ENCODE measurements at regions of chr11 and their contacts with region 1.

Region 1: GRCh38 chr11:11157185-11157584 is 195.9 kb downstream of the CSNK2A3 start:
- DNase-seq: peak; percentile 48 to 87 (median 58)
- ATAC-seq: peak; percentile 74 to 84
- H3K4me3 Mint-ChIP-seq: peak overlapping the region in 3 of 10 donors; percentile 73 to 87 (median 83)
- H3K27ac Mint-ChIP-seq: peak overlapping the region; percentile 63 to 98 (median 92)
- H3K4me1 Mint-ChIP-seq: peaks cover 9 to 43% (median 22%) of the 10 kb centered on the region in 4 donors
- H3K27me3 Mint-ChIP-seq: peaks cover 0 to 1% (median 0%) of the 10 kb centered on the region in 5 donors

Region 2: GRCh38 chr11:11036848-11037732 is 120.1 kb before region 1 on chr11:
- POLR2A ChIA-PET with region 1: interaction called, 22 read pairs
- DNase-seq: peak in 9 of 10 donors; percentile 17 to 71 (median 44)
- ATAC-seq: peak; percentile 91 to 95
- H3K4me3 Mint-ChIP-seq: peak overlapping the region in 2 of 10 donors; percentile 11 to 18
- H3K27ac Mint-ChIP-seq: peak overlapping the region; percentile 22 to 88 (median 79)
- H3K4me1 Mint-ChIP-seq: peaks cover 6 to 27% (median 17%) of the 10 kb centered on the region in 4 donors
- H3K27me3 Mint-ChIP-seq: peaks cover 0 to 5% (median 0%) of the 10 kb centered on the region in 5 donors

Region 3: DNA sequence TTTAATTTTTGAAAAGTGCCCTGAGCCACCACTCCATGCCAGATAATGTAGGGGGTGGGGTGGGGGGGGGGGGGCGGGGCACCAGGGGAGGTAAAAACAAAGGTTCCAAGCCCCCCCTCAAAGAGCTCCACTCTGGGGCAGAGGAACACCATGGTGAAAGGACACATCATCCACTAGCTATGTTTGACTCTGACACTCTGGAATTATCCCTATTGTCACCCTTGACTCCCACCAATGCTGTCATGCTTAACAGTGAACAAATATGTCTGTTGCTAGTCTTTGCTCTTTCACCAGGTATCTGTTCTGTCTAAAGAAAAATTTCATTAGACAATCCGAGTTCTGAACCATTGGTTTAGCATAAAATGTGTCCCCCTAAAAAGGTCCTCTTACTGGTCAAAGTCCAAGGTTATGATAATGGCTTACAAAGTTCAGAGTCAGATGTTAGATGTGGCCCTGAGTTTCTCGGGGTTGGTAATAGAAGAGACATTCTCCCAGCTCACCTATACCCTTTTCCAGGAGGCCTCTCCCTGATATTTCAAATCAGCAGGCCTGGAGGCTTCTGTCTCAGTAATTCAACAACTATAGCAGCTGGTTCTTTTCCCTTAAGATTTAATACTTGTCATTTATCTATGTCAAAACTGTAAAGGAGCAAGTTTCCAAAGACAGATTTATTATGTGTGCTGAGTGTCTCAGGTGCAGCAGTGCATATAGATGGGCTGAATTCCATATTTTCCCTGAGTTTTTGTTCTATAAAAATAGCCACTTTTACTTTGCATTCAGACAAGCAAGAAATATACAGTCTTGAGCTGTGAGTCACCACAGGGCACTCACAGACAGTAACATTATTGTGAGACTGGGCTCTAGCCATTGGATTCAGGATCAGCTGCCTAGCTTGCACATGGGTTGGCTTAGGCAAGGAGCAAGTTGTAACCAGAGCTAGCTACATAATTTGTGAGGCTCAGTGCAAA is 21.8 kb after region 1 on chr11:
- POLR2A ChIA-PET with region 1: no interaction called
- DNase-seq: no peak
- ATAC-seq: no peak
- H3K4me3 Mint-ChIP-seq: no peak overlapping the region
- H3K27ac Mint-ChIP-seq: no peak overlapping the region
- H3K4me1 Mint-ChIP-seq: no peaks in the 10 kb centered on the region
- H3K27me3 Mint-ChIP-seq: peaks cover 7 to 21% (median 10%) of the 10 kb centered on the region in 5 donors